Tibial artery (tissue), 4 donors: ENCODE measurements at regions of chr11 and their contacts with region 1.

Region 1: DNA sequence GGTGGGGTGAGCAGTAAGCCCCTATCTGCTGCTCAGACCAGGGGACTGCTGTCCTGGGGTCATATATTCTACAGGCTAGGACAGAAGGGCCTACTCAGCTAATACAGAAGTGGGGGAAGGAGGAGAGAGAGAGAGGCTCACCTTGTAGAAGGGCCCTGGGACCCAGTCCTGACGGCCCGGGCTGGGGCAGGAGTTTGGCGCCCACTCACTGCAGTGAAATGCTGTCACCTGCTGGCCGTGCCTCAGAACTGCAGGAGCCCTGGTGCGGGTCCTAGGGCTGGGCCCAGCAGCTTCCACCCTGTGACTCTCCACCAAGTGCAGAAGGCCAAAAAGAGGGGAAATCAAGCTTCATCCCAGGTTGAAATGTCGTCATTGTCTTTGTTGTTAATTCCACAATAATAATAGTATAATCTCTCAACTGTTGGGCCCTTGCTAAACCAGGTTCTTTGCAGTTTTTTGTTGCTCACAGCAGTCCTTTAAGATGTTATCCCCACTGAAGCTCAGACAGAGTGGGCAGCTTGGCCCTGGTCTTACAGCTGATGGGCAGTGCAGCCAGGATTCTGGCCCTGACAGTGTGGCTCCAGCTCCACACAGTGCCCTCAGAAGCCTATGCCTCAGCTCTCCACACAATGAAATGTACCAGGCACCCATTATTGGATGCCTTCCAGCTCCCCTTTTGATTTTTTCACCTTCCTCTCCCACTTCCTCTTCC is 29.6 kb downstream of the TRIM29 start:
- DNase-seq: peak in 1 of 2 donors; percentile 66
- H3K4me3 ChIP-seq: no peak overlapping the region
- H3K27ac ChIP-seq: no peak overlapping the region
- H3K4me1 ChIP-seq: no peaks in the 10 kb centered on the region
- H3K27me3 ChIP-seq: peaks cover 0 to 22% of the 10 kb centered on the region in 2 donors
- CTCF ChIP-seq: peak; percentile 97 to 99

Region 2: DNA sequence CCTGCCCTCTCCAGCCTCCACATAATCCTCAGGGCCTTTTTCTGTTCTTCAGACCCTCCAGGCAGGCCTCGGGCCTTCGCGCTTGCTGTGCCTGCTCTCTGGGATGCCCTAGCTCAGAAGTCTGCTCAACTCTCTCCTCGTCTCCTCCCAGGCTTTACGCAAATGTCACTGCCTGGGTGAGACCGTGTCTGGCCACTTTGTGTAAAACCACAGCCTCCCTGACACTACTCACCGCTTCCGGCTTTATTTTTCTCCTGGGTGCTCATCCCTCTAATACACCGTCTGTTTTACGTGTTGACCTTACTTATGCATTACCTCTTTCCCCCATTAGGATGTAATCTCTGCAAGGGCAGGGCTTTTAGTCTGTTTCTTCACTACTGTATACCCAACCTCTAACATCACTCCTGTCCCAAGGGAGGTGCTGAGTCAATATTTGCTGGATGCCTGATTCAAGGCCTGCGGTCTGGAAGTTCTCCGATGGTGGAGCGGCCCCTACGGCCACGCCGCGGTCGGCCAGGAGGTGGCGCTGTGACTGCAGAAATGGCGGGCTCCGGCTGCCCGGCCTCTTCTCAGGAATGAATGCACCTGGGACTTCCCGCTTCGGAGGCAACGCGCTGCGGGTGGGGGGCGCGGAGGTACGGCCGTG is 627.2 kb before region 1 on chr11:
- intact Hi-C with region 1: loop called (anchors 10 kb)
- DNase-seq: peak; percentile 87 to 91
- H3K4me3 ChIP-seq: no peak overlapping the region
- H3K27ac ChIP-seq: no peak overlapping the region
- H3K4me1 ChIP-seq: peaks cover 0 to 10% (median 7%) of the 10 kb centered on the region in 4 donors
- H3K27me3 ChIP-seq: peaks cover 0 to 30% of the 10 kb centered on the region in 2 donors
- CTCF ChIP-seq: peak; percentile 88 to 93

Region 3: DNA sequence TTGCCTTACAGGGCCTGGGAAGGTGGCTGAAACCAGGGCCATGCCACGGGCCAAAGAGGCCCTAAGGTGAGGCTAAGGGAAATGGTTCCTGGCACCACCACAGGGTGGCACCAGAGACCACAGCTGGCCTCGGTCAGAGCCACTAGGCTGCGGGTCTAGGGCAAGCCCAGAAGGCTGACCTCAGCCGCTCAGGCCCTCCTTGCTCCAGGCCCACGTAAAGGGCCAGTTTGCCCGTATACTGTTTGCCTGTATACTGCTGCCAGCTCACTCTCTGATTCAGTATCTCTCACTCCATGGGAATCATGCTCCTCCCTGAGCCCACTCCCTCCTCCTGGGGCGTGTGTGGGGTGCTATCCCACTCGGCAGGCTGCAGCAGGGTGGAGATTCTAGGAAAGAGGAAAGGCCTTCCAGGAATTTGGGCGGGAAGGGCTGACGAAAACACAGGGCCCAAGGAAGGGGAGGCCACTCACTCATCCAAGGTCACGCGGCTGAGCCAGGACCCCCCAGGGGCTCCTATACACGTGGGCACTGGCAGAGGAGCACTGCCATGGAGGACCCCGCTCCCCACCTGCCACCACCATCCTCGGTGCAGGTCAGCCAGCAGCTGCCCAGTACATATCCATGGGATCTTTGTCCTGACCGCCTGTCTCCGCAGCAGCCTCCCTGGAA is 441.7 kb before region 1 on chr11:
- intact Hi-C with region 1: loop called (anchors 5 kb)
- DNase-seq: peak; percentile 65 to 83
- H3K4me3 ChIP-seq: no peak overlapping the region
- H3K27ac ChIP-seq: no peak overlapping the region
- H3K4me1 ChIP-seq: peaks cover 0 to 16% (median 7%) of the 10 kb centered on the region in 4 donors
- H3K27me3 ChIP-seq: no peaks in the 10 kb centered on the region
- CTCF ChIP-seq: peak; percentile 97

Region 4: DNA sequence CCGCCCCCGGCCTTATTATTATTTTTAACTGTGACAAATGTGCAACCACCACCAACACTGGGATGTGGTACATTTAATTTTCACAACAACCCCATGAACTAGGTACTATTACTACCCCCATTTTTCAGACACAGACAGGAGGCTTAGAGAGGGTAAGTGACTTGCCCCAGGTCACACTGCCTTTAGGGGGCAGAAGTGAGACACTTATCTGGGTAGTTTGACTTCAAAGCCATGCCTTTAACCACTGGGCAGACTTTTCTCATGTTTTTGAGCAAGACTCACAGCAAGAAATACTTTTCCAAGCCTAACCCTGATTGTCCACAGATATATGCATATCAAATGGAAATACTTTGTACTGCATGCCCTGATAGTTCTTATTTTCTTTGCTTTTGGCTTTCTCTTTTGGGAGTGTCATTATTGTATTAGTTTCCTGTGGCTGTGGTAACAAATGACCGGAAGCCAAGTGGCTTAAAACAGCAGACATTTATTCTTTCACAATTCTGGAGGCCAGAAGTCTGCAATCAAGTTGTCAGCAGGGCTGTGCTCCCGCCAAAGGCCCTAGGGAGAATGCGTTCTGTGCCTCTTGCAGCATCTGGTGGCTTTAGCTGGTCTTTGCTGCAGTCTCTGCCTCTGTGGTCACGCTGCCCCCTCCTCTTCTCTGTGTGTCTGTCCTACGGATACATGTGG is 514.0 kb after region 1 on chr11:
- intact Hi-C with region 1: no loop called
- DNase-seq: no peak
- H3K4me3 ChIP-seq: no peak overlapping the region
- H3K27ac ChIP-seq: no peak overlapping the region
- H3K4me1 ChIP-seq: no peaks in the 10 kb centered on the region
- H3K27me3 ChIP-seq: no peaks in the 10 kb centered on the region
- CTCF ChIP-seq: no peak